Activated B cell treated with CpG ODN at 0.5 μM for 24 hours (primary cell): ENCODE measurements at regions of chr1 and their contacts with region 1.

Region 1: DNA sequence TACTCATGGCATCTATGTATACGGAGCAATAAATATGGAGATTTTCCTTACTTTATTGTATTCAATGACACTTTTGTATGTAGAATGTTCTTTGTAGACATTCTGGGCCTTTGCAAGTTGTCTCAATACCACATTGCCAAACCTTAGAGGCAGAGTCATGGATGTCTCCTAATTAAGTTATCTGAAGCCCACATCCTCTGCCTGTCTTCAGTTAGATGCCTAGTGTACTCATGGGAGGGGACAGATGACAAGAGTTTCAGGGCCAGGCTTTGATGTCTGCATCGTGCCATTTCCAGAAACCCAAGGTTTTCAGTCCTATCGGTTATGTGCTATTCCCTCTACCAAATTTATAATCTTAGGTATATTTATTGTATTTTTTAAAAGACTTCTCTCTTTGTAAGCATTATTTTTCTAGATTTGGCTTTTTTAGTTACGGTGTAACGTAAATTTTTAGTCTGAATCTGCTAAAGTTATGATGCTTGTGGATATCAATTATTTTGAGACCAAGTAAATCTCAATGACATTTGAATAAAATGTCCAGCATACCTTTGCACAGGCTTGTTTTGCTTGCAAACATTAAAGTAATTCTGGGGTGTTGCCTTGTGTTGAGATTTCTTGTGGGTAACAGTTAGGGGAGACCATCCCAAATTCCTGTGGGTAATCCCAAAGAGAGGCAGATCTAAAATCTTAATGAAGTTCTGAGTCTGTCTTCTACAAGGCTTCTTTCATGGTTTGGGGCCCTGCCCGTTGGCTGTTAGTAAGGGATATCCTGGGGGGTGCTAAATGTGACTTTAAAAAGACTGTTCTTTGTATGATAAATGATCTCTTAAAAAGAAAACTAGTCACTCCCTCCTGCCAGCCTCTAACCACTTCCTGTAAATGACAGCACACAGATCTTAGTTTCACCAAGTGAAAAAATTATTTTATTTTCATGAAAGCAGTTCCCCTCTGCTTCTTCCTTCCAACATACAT is 8.0 kb upstream of the MACF1 start:
- DNase-seq: no peak
- ATAC-seq: peak; percentile 35
- H3K4me3 Mint-ChIP-seq: peak overlapping the region; percentile 61
- H3K27ac Mint-ChIP-seq: peak overlapping the region; percentile 91
- H3K4me1 Mint-ChIP-seq: peaks cover 76% of the 10 kb centered on the region
- H3K27me3 Mint-ChIP-seq: no peaks in the 10 kb centered on the region
- CTCF ChIP-seq: no peak

Region 2: GRCh38 chr1:39105061-39105840 is 91.3 kb before region 1 on chr1:
- CTCF ChIA-PET with region 1: interaction called, 86 read pairs
- POLR2A ChIA-PET with region 1: interaction called, 17 read pairs
- intact Hi-C with region 1: loop called (anchors 1 kb)
- DNase-seq: peak; percentile 62
- ATAC-seq: peak; percentile 8
- H3K4me3 Mint-ChIP-seq: no peak overlapping the region
- H3K27ac Mint-ChIP-seq: no peak overlapping the region
- H3K4me1 Mint-ChIP-seq: peaks cover 33% of the 10 kb centered on the region
- H3K27me3 Mint-ChIP-seq: no peaks in the 10 kb centered on the region
- CTCF ChIP-seq: no peak

Region 3: DNA sequence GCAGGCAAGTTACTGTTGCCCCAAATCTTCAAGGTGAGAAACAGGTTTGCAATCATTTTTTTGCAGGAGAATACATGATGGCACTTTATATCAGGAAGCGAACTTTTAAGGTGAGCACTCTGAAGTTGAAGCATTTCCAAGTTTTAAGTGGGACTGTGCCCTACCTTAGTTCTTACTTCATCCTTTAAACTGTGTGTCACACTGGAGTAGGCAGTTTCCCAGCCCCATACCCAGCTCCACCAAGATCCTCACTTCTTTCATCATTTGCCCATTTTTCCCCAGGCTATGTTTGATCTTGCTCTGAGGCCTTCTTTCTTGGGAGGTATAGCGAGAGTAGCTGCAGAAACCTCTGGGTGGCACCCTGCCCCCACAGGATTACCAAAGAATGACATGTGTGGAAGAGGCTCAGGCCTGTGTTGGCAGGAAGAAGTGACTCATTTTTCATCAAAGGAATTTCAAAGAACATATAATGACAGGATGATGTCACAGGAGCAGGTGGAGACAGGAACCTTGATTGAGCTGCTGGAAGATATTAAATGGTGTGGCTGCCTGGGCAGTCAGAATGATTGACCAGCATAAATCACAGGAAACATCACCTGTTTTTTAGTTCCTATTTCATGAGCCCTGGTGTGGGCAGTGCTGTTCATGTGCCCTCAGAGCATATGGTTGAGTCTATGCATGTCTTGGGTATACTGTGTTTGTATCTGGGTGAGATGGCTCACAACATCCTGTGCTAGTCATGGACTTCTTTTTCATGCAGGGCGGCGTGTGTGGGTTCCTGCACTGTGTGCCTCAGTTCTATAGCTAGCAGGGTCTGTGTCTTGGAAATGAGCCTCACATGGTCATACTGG is 12.8 kb before region 1 on chr1:
- CTCF ChIA-PET with region 1: interaction called, 20 read pairs
- POLR2A ChIA-PET with region 1: interaction called, 3 read pairs
- intact Hi-C with region 1: loop called (anchors 1 kb)
- DNase-seq: no peak
- ATAC-seq: peak; percentile 81
- H3K4me3 Mint-ChIP-seq: peak overlapping the region; percentile 21
- H3K27ac Mint-ChIP-seq: peak overlapping the region; percentile 76
- H3K4me1 Mint-ChIP-seq: peaks cover 47% of the 10 kb centered on the region
- H3K27me3 Mint-ChIP-seq: no peaks in the 10 kb centered on the region
- CTCF ChIP-seq: no peak

Region 4: DNA sequence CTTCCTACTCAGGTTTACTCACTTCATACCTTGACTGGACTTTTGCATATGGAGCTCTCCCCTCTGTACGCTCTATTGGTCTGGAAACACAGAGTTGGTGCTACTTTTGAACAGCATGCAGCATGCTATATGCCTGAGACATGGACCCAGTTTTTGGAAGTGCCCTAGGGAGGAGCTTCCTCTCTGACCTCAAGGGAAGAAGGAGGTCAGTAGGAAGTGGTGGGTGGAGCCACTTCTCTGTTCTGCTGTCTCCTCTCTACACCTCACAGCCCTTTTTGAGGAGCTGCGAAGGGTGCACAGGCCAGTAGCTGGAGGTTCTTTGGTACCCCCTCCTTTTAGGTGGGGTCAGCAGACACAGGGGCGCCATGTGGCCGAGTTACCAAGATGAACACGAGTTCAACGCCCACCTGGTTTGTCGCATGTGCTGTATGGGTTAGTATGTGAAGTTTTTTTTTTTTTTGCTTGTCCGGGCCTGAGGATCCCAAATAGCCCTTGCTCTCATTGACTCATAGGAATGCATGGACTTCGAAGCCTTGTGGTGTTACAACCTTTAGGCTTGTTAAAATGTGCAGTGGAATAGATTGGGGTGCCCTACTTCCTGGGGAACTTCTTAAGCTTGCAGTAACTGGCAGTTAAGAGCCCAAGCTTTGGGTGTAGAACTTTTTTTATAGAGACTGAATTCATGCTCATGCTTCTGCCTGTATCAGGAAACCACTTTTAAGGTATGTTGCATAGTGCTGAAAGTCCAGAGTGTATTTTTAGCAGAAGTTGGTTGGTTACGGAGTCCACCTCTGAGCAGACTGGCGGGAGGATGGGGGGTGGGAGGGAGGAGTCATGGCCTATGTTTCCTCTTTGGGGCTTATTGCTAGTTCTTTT is 18.7 kb after region 1 on chr1:
- CTCF ChIA-PET with region 1: interaction called, 27 read pairs
- POLR2A ChIA-PET with region 1: interaction called, 16 read pairs
- intact Hi-C with region 1: loop called (anchors 1 kb)
- DNase-seq: peak; percentile 20
- ATAC-seq: peak; percentile 83
- H3K4me3 Mint-ChIP-seq: peak overlapping the region; percentile 84
- H3K27ac Mint-ChIP-seq: peak overlapping the region; percentile 83
- H3K4me1 Mint-ChIP-seq: peaks cover 55% of the 10 kb centered on the region
- H3K27me3 Mint-ChIP-seq: no peaks in the 10 kb centered on the region
- CTCF ChIP-seq: no peak

Region 5: GRCh38 chr1:39230261-39231190 is 34.0 kb after region 1 on chr1:
- CTCF ChIA-PET with region 1: interaction called, 13 read pairs
- POLR2A ChIA-PET with region 1: no interaction called
- intact Hi-C with region 1: loop called (anchors 2 kb)
- DNase-seq: peak; percentile 24
- ATAC-seq: peak; percentile 86
- H3K4me3 Mint-ChIP-seq: peak overlapping the region; percentile 36
- H3K27ac Mint-ChIP-seq: peak overlapping the region; percentile 85
- H3K4me1 Mint-ChIP-seq: peaks cover 47% of the 10 kb centered on the region
- H3K27me3 Mint-ChIP-seq: no peaks in the 10 kb centered on the region
- CTCF ChIP-seq: no peak

Region 6: GRCh38 chr1:39258146-39258924 is 61.8 kb after region 1 on chr1:
- CTCF ChIA-PET with region 1: interaction called, 120 read pairs
- POLR2A ChIA-PET with region 1: interaction called, 4 read pairs
- intact Hi-C with region 1: loop called (anchors 1 kb)
- DNase-seq: peak; percentile 32
- ATAC-seq: peak; percentile 70
- H3K4me3 Mint-ChIP-seq: no peak overlapping the region
- H3K27ac Mint-ChIP-seq: peak overlapping the region; percentile 11
- H3K4me1 Mint-ChIP-seq: peaks cover 32% of the 10 kb centered on the region
- H3K27me3 Mint-ChIP-seq: no peaks in the 10 kb centered on the region
- CTCF ChIP-seq: peak; percentile 55

Region 7: DNA sequence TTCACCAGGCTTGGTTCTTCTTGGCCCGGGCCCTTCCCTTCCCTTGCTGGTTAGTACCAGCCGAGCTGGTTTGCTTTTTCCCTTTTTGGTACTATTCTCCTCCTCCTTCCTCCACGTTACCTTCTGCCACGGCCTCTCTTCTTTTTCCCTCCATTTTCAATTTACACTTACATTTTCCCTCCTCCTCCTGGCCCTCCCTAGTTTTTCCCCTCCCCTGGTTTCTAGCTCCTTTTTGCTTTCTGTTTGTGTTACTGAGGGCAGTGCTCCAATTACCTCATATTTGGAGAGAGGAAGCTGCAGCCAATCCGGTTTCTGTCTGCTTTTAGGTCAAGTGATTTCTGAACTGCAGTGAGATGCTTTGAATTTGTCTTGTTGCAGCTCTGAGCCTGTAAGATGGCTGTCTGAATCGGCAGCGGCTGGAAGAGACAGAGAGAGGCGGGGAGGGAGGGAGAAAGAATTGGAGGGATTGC is 71.6 kb after region 1 on chr1:
- CTCF ChIA-PET with region 1: interaction called, 40 read pairs
- POLR2A ChIA-PET with region 1: interaction called, 6 read pairs
- intact Hi-C with region 1: loop called (anchors 2 kb)
- DNase-seq: no peak
- ATAC-seq: no peak
- H3K4me3 Mint-ChIP-seq: peak overlapping the region; percentile 82
- H3K27ac Mint-ChIP-seq: peak overlapping the region; percentile 84
- H3K4me1 Mint-ChIP-seq: peaks cover 65% of the 10 kb centered on the region
- H3K27me3 Mint-ChIP-seq: no peaks in the 10 kb centered on the region
- CTCF ChIP-seq: no peak